GM13977 (cell line): ENCODE measurements at regions of chr1 and their contacts with region 1.

Region 1: DNA sequence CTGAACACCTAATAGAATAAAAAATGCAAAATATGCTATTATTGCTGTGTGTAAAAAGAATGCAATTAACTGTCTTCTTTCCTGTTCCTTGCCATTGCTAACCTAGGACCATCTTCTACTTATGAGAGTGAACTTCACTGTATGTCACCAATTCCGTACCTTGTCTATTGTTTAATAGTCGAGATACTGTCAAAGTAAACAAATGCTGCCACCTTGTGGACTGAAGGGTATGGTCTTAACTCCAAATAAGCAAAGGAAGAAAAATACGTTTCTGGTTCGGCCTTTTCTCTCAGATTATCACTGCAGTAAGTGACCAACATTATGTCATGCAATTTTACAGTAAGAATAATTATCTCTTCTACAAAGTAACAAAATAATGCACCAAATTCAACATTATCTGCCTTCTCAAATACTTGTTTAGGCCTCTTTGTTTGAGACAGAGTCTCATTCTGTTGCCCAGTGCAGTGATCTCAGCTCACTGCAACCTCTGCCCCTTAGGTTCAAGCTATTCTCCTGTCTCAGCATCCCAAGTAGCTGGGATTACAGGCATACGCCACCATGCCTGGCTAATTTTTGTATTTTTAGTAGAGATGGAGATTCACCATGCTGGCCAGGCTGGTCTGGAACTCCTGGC is 133.4 kb downstream of the COP1 start:
- DNase-seq: no peak
- CTCF ChIP-seq: peak; percentile 64

Region 2: DNA sequence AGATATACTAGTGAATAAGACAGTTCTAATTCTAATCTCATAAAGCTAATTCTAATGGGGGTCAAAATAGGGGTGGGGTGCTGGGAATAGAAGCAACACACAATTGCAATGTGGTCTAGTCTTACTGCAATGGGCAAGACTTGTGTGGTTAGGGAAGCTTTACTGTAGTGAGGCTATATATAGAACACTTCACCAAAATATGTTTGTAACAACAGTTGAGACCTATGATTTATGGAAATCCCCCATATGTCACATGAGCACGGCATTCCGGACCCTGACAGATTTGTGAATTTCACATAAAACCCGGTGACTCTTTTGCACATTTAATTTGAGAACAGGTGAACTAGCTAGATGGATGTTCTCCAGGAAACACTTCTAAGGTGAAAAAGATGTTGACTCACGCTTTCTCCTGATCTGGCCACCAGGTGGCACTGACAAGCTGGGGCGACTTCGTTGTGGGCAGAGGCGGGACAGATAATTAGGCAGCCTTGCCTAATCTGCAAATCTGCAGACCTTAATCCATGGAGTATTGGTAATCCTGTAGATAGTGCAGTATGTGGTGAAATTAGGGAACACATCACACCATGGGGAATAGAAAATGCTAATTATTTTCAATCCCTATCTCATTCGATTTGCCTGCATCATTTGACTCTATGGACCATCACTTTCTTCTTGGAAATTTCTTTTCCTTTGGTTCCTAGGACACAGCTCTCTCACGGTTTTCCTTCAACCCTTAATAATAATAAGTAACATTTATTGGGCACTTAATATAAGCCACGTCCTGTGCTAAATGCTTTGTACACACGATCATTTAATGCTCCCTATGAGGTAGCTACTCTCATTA is 918.8 kb before region 1 on chr1:
- in situ Hi-C with region 1: loop called (anchors 25 kb)
- DNase-seq: peak; percentile 70
- CTCF ChIP-seq: peak; percentile 92

Region 3: GRCh38 chr1:175373786-175374623 is 699.6 kb before region 1 on chr1:
- in situ Hi-C with region 1: loop called (anchors 25 kb)
- DNase-seq: peak; percentile 47
- CTCF ChIP-seq: peak; percentile 74

Region 4: GRCh38 chr1:176009951-176010350 is 63.7 kb before region 1 on chr1:
- in situ Hi-C with region 1: no loop called
- DNase-seq: no peak
- CTCF ChIP-seq: no peak